Caco-2 (cell line): ENCODE measurements at regions of chr7 and their contacts with region 1.

Region 1: GRCh38 chr7:87939176-87939575 is 5.1 kb downstream of the ADAM22 start:
- DNase-seq: peak in 1 of 2 experiments; percentile 32
- H3K4me3 ChIP-seq: no peak overlapping the region
- H3K4me3 Mint-ChIP-seq: peak overlapping the region; percentile 23
- H3K27ac Mint-ChIP-seq: peak overlapping the region; percentile 18
- H3K4me1 ChIP-seq: peaks cover 30% of the 10 kb centered on the region
- H3K4me1 Mint-ChIP-seq: peaks cover 17% of the 10 kb centered on the region
- H3K27me3 ChIP-seq: no peaks in the 10 kb centered on the region
- H3K27me3 Mint-ChIP-seq: no peaks in the 10 kb centered on the region
- CTCF ChIP-seq: no peak

Region 2: GRCh38 chr7:87003872-87004798 is 935.0 kb before region 1 on chr7:
- CTCF ChIA-PET with region 1: no interaction called
- POLR2A ChIA-PET with region 1: no interaction called
- intact Hi-C with region 1: no loop called
- DNase-seq: no peak
- H3K4me3 ChIP-seq: no peak overlapping the region
- H3K4me3 Mint-ChIP-seq: no peak overlapping the region
- H3K27ac Mint-ChIP-seq: no peak overlapping the region
- H3K4me1 ChIP-seq: no peaks in the 10 kb centered on the region
- H3K4me1 Mint-ChIP-seq: no peaks in the 10 kb centered on the region
- H3K27me3 ChIP-seq: no peaks in the 10 kb centered on the region
- H3K27me3 Mint-ChIP-seq: peaks cover 2% of the 10 kb centered on the region
- CTCF ChIP-seq: no peak

Region 3: DNA sequence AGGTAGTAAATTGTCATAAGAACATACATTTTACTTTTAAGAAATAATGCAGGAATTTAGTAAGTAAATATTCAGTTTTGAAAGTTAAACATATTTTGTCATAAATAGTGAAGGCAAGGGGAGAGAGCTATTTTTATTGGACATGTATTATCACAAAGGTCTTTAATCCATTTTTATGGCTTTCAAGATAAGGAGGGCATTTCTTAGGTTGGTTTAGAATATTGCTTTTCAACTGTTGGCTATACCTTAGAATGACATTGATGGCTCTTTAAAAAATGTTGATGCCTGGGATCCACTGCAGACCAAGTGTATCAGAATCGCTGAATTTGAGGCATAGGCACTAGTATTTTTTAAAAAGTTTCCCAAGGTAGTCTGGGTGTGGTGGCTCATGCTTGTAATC is 28.8 kb after region 1 on chr7:
- CTCF ChIA-PET with region 1: no interaction called
- POLR2A ChIA-PET with region 1: no interaction called
- intact Hi-C with region 1: loop called (anchors 1 kb)
- DNase-seq: peak in 1 of 2 experiments; percentile 25
- H3K4me3 ChIP-seq: no peak overlapping the region
- H3K4me3 Mint-ChIP-seq: no peak overlapping the region
- H3K27ac Mint-ChIP-seq: peak overlapping the region; percentile 56
- H3K4me1 ChIP-seq: peaks cover 16% of the 10 kb centered on the region
- H3K4me1 Mint-ChIP-seq: peaks cover 17% of the 10 kb centered on the region
- H3K27me3 ChIP-seq: no peaks in the 10 kb centered on the region
- H3K27me3 Mint-ChIP-seq: no peaks in the 10 kb centered on the region
- CTCF ChIP-seq: no peak

Region 4: DNA sequence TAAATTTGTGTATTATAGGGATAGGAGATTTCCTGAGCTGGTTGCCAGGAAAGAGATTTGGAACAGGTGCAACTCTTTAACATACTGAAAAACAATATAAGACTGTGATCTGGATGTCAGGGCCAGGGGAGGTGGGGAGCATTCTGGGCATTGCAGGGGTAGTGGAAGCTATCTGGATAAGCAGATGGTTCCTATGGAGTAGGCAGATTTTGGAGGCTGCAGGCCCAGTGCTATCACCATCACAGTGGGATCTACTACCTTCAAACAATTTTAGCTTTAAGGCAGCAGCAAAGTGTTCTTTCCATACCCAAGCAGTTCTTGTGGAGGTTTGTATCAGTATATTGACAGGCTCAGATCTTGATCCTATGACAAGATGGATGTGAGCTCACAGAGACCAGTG is 66.0 kb after region 1 on chr7:
- CTCF ChIA-PET with region 1: no interaction called
- POLR2A ChIA-PET with region 1: no interaction called
- intact Hi-C with region 1: no loop called
- DNase-seq: no peak
- H3K4me3 ChIP-seq: no peak overlapping the region
- H3K4me3 Mint-ChIP-seq: no peak overlapping the region
- H3K27ac Mint-ChIP-seq: no peak overlapping the region
- H3K4me1 ChIP-seq: no peaks in the 10 kb centered on the region
- H3K4me1 Mint-ChIP-seq: no peaks in the 10 kb centered on the region
- H3K27me3 ChIP-seq: no peaks in the 10 kb centered on the region
- H3K27me3 Mint-ChIP-seq: no peaks in the 10 kb centered on the region
- CTCF ChIP-seq: no peak

Region 5: GRCh38 chr7:88184848-88185304 is 245.7 kb after region 1 on chr7:
- CTCF ChIA-PET with region 1: no interaction called
- POLR2A ChIA-PET with region 1: no interaction called
- intact Hi-C with region 1: no loop called
- DNase-seq: no peak
- H3K4me3 ChIP-seq: no peak overlapping the region
- H3K4me3 Mint-ChIP-seq: no peak overlapping the region
- H3K27ac Mint-ChIP-seq: no peak overlapping the region
- H3K4me1 ChIP-seq: no peaks in the 10 kb centered on the region
- H3K4me1 Mint-ChIP-seq: no peaks in the 10 kb centered on the region
- H3K27me3 ChIP-seq: no peaks in the 10 kb centered on the region
- H3K27me3 Mint-ChIP-seq: no peaks in the 10 kb centered on the region
- CTCF ChIP-seq: no peak

Region 6: GRCh38 chr7:88226886-88227516 is 287.8 kb after region 1 on chr7:
- CTCF ChIA-PET with region 1: no interaction called
- POLR2A ChIA-PET with region 1: interaction called, 6 read pairs
- intact Hi-C with region 1: loop called (anchors 1 kb)
- DNase-seq: peak; percentile 79 to 85
- H3K4me3 ChIP-seq: no peak overlapping the region
- H3K4me3 Mint-ChIP-seq: no peak overlapping the region
- H3K27ac Mint-ChIP-seq: peak overlapping the region; percentile 53
- H3K4me1 ChIP-seq: peaks cover 36% of the 10 kb centered on the region
- H3K4me1 Mint-ChIP-seq: no peaks in the 10 kb centered on the region
- H3K27me3 ChIP-seq: no peaks in the 10 kb centered on the region
- H3K27me3 Mint-ChIP-seq: no peaks in the 10 kb centered on the region
- CTCF ChIP-seq: no peak